Heart right ventricle (tissue), 16 donors: ENCODE measurements at regions of chr14 and their contacts with region 1.

Region 1: DNA sequence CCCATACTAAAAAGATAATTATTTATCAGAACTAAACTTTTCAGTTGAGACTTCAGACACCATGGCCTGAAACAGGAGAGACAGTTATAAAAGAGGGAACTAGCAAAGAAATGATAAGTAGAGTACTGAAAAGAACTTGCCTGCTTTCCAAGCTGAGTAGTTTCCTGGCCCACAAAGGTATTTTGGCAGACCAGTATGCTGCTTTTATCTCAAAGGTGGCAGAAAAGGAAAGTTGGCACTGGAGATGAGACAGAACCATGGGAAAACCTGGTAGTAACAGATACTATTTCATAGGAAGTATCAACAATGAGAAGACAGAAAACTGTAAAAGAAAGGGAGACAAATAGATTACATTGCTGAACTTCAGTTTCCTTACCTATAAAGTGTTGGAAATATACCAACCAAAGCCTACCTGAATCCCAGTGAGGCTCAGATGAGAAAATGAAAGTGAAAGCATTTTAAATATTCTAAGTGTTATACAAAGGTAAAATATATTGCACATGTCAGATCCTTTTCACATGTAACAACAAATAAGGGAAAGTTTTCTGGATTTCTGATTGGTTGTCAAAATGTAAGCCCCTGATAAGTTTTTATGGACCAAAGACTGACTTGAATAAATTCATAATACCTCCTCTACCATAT is 155.3 kb upstream of the FSCB start:
- DNase-seq: no peak
- ATAC-seq: no peak
- H3K4me3 ChIP-seq: no peak overlapping the region
- H3K27ac ChIP-seq: no peak overlapping the region
- H3K4me1 ChIP-seq: no peaks in the 10 kb centered on the region
- H3K27me3 ChIP-seq: no peaks in the 10 kb centered on the region
- CTCF ChIP-seq: no peak

Region 2: DNA sequence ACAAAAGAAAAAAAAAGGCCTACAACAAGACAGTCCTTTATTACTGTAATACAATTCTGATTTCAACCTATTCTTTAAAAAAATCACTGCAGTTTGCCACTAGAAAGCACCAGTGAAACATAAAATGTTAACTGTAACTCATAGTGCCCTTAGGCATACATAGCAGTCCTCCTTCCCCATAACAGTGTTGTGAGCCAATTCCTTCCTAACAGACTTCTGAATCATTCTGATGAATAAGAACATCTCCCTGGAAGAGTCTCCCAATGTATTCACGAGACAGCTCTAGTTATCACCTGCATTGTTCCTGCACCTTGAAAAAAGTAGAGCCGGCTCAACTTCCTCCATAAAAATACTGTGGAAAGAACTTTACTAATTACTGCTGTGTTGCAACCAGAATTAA is 58.3 kb after region 1 on chr14:
- intact Hi-C with region 1: loop called in 1 of 10 experiments (anchors 2 kb)
- DNase-seq: no peak
- ATAC-seq: no peak
- H3K4me3 ChIP-seq: no peak overlapping the region
- H3K27ac ChIP-seq: no peak overlapping the region
- H3K4me1 ChIP-seq: no peaks in the 10 kb centered on the region
- H3K27me3 ChIP-seq: no peaks in the 10 kb centered on the region
- CTCF ChIP-seq: no peak